Astrocyte of the cerebellum (primary cell): ENCODE measurements at regions of chrX and their contacts with region 1.

Region 1: DNA sequence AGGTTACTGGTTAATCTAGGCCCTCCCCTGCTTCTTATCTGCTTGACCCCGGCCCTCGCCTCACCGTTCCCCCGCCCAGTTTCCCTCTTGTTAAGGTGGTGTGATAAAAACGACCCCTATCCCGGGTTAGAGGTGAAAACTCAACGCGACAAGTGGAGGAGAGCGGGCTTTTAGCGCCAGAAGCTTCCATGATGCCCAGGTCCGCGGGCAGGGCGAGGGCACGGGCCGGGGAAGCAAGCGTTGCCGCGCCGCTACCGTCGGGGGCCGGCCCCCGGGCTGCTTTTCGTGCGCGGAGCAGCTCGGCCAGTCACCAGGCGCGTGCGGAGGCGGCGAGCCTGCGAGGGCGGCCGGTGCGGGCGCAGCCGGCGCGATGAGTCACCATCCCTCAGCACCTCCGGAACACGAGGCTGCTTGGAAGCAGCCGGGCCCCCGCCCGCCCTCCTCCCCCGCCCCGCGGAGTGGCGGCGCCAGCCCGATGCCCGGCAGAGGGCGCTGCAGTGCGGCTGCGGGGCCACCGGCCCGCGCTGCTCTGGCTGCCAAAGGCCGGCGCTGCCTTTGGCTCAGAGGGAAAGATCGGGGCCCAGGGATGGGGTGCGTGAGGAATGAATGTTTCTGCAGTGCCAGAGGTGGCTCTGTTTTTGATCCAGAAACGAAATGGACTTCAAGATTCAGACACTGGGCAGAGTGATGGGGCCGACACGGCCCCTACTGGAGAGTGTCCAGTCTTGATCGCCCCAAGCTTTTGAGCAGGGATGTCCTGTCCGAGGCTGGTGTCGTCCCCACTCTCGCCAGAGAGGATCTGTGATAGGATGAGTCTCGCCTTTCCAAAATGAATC is 107.8 kb downstream of the NHSL2 start:
- DNase-seq: peak; percentile 63
- H3K4me3 ChIP-seq: no peak overlapping the region
- CTCF ChIP-seq: peak; percentile 38

Region 2: GRCh38 chrX:72094894-72095293 is 76.4 kb after region 1 on chrX:
- in situ Hi-C with region 1: no loop called
- DNase-seq: no peak
- H3K4me3 ChIP-seq: no peak overlapping the region
- CTCF ChIP-seq: no peak

Region 3: GRCh38 chrX:72126539-72127140 is 108.1 kb after region 1 on chrX:
- in situ Hi-C with region 1: loop called (anchors 5 kb)
- DNase-seq: peak; percentile 70
- H3K4me3 ChIP-seq: no peak overlapping the region
- CTCF ChIP-seq: peak; percentile 86